Caco-2 (cell line): ENCODE measurements at regions of chr3 and their contacts with region 1.

Region 1: DNA sequence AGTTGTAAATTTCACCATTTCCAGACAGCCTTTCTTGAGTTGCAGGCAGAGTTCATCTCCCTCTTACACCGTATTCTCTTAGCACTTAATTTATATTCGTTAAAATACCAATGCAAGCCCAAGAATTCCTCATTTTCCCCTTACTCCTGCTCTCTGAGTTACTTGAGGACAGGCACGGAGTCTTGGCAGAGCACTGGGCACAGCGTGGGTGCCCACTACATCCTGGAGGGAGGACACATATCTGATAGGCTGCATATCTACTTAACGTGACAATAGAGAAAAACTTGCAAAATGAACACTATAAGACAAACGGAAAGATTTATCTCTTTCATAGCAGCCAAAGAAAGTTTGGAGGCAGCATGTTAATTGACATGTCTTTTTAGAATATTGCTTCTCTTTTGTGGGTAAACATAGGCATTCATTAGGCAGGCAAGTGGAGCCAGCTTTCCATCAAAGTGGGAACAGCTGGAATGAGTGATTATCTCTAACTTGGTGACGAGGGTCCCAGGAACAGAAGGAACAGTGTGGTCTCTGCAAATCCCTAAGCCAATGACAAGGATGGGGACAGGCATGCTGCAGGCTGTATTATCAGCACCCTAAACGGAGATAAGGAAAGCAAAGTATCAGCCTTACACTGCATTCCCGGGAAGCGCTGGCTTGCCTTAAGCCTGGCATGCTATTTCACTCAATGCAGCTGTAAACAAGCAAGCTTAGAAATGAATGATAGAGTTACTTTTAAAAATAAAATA is 116.5 kb downstream of the RTP4 start:
- DNase-seq: no peak
- H3K4me3 ChIP-seq: no peak overlapping the region
- H3K4me3 Mint-ChIP-seq: no peak overlapping the region
- H3K27ac Mint-ChIP-seq: no peak overlapping the region
- H3K4me1 ChIP-seq: no peaks in the 10 kb centered on the region
- H3K4me1 Mint-ChIP-seq: no peaks in the 10 kb centered on the region
- H3K27me3 ChIP-seq: no peaks in the 10 kb centered on the region
- H3K27me3 Mint-ChIP-seq: peaks cover 5% of the 10 kb centered on the region
- CTCF ChIP-seq: no peak

Region 2: GRCh38 chr3:187352581-187353575 is 131.8 kb before region 1 on chr3:
- CTCF ChIA-PET with region 1: no interaction called
- POLR2A ChIA-PET with region 1: no interaction called
- intact Hi-C with region 1: no loop called
- DNase-seq: no peak
- H3K4me3 ChIP-seq: no peak overlapping the region
- H3K4me3 Mint-ChIP-seq: no peak overlapping the region
- H3K27ac Mint-ChIP-seq: no peak overlapping the region
- H3K4me1 ChIP-seq: 0 out of 2 replicates have a peak, but pooled peaks cover 8% of the 10 kb centered on the region
- H3K4me1 Mint-ChIP-seq: peaks cover 12% of the 10 kb centered on the region
- H3K27me3 ChIP-seq: no peaks in the 10 kb centered on the region
- H3K27me3 Mint-ChIP-seq: no peaks in the 10 kb centered on the region
- CTCF ChIP-seq: no peak

Region 3: GRCh38 chr3:187398955-187399354 is 85.8 kb before region 1 on chr3:
- CTCF ChIA-PET with region 1: interaction called, 3 read pairs
- POLR2A ChIA-PET with region 1: interaction called, 11 read pairs
- intact Hi-C with region 1: no loop called
- DNase-seq: no peak
- H3K4me3 ChIP-seq: no peak overlapping the region
- H3K4me3 Mint-ChIP-seq: no peak overlapping the region
- H3K27ac Mint-ChIP-seq: no peak overlapping the region
- H3K4me1 ChIP-seq: no peaks in the 10 kb centered on the region
- H3K4me1 Mint-ChIP-seq: peaks cover 12% of the 10 kb centered on the region
- H3K27me3 ChIP-seq: no peaks in the 10 kb centered on the region; the same call in 1 of the 2 replicates
- H3K27me3 Mint-ChIP-seq: peaks cover 4% of the 10 kb centered on the region
- CTCF ChIP-seq: no peak